ENCODE measurements at regions of chr11 and their contacts with region 1.

Region 1: DNA sequence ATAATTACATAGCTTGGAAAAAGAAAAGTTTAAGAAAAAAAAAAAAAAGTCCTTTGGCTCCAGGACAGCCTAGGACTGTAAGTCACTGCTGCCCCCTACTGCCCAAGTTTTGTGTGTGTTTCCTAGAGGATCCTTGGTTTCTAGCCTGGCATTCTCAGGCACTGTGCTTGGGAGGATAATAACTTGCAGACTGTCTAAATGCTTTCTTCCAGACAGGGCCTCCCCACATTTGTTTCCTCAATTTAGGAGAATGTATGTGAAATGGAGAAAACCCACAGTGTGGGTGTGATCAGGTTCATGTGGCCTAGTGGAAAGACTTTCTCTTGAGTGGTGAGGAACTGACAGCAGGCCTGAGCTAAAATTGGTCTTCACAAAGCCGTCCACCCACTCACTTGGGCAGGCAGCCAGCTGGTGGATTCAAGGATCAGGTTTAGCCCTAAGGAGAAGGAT is 191.0 kb downstream of the NAV2 start:
- DNase-seq: peak; percentile 75
- ATAC-seq: peak; percentile 64 to 72

Region 2: GRCh38 chr11:19561011-19561410 is 342.6 kb before region 1 on chr11:
- intact Hi-C with region 1: loop called (anchors 5 to 10 kb)
- DNase-seq: no peak
- ATAC-seq: no peak

Region 3: DNA sequence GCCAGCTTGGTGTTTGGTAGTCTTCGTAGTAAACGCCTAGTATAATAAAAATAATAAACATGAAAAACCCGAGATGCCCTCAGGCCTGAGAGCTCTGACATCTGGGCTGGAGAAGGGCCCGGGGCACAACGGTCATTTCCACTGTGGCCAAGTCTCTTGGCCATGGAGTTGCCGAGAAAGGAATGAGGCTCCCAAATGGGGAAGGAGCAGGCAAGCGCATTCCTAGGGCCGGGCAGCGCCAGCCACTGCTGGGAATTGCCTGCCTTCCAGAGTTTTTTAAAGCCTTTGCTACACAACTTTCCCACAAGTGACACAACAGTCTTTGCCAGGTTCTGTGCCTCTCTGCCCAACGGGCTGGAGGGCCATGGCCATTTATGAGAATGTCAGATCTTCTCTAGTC is 87.6 kb before region 1 on chr11:
- intact Hi-C with region 1: loop called in 1 of 2 experiments (anchors 2 kb)
- DNase-seq: no peak
- ATAC-seq: peak in 1 of 2 donors; percentile 69

Region 4: DNA sequence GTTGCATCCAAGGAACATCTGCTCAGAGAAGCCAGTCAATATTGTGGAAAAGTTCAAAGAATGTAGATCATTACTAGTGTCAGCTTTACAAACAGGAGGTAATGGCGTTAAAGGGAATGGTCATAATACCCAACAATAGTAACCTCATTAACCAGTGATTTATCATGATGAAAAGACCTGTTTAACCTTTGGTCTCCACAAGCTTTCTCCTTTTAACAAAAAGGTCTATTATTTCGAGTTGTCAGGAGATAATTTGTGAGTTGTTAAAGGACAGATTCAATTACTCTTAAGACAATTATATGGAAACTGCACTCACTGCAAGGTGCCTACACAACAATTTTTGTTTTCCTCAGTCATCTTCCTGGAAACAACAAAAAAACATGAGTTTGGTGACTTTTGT is 386.1 kb after region 1 on chr11:
- intact Hi-C with region 1: no loop called
- DNase-seq: no peak
- ATAC-seq: no peak